ENCODE measurements at regions of chr22 and their contacts with region 1.

Region 1: GRCh38 chr22:42544686-42545085 is 9.1 kb upstream of the SERHL2 start:
- DNase-seq: no peak
- H3K4me3 Mint-ChIP-seq: no peak overlapping the region
- H3K27ac Mint-ChIP-seq: no peak overlapping the region
- H3K4me1 Mint-ChIP-seq: peaks cover 2% of the 10 kb centered on the region
- H3K27me3 Mint-ChIP-seq: peaks cover 2% of the 10 kb centered on the region

Region 2: GRCh38 chr22:42533638-42533977 is 11.1 kb before region 1 on chr22:
- CTCF ChIA-PET with region 1: interaction called, 15 read pairs
- POLR2A ChIA-PET with region 1: no interaction called
- DNase-seq: no peak
- H3K4me3 Mint-ChIP-seq: peak overlapping the region; percentile 46
- H3K27ac Mint-ChIP-seq: peak overlapping the region; percentile 87
- H3K4me1 Mint-ChIP-seq: peaks cover 29% of the 10 kb centered on the region
- H3K27me3 Mint-ChIP-seq: no peaks in the 10 kb centered on the region

Region 3: GRCh38 chr22:43923631-43924464 is 1379.2 kb after region 1 on chr22 and contains the start of gene PNPLA3:
- CTCF ChIA-PET with region 1: no interaction called
- POLR2A ChIA-PET with region 1: no interaction called
- DNase-seq: peak; percentile 78
- H3K4me3 Mint-ChIP-seq: peak within 1 kb of the TSS; percentile 69
- H3K27ac Mint-ChIP-seq: peak within 1 kb of the TSS; percentile 63
- H3K4me1 Mint-ChIP-seq: peaks cover 4% of the 10 kb centered on the region
- H3K27me3 Mint-ChIP-seq: peaks cover 25% of the 10 kb centered on the region
- total RNA-seq, gene PNPLA3: not detected

Measured in activated CD4-positive, alpha-beta T cell treated with anti-CD3 and anti-CD28 coated beads, Interleukin-2, amount 10 ng/mL, durations not matched to agents 7 days and 5 days (primary cell).